Activated CD8-positive, alpha-beta memory T cell treated with anti-CD3 and anti-CD28 coated beads, Interleukin-2, amount 10 ng/mL, durations not matched to agents 7 days and 5 days (primary cell): ENCODE measurements at regions of chr1 and their contacts with region 1.

Region 1: DNA sequence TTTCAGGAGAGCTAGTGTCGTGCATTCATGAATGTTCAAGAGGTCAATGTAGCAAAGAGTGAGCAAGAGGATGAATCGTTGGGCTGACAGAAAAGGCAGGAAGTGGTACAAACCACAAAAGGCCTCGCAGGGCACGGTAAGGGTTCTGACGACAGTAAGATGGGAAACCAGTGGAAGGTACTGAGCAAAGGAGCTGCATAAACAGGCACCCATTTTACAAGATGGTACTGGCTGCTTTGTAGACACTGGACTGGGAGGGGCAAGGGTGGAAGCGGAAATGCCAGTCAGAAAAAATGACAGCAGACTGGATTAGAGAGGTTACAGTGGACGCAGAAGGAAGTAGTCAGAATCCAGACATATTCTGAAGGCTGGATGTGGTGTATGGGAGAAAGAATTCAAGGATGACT is 123.5 kb downstream of the PTPN14 start:
- DNase-seq: peak; percentile 93
- ATAC-seq: peak; percentile 100
- H3K4me3 Mint-ChIP-seq: peak overlapping the region; percentile 40
- H3K27ac Mint-ChIP-seq: peak overlapping the region; percentile 92
- H3K4me1 Mint-ChIP-seq: peaks cover 24% of the 10 kb centered on the region
- H3K27me3 Mint-ChIP-seq: no peaks in the 10 kb centered on the region

Region 2: GRCh38 chr1:214439352-214440119 is 11.7 kb after region 1 on chr1:
- CTCF ChIA-PET with region 1: interaction called, 11 read pairs
- DNase-seq: peak; percentile 60
- ATAC-seq: peak; percentile 81
- H3K4me3 Mint-ChIP-seq: peak overlapping the region; percentile 55
- H3K27ac Mint-ChIP-seq: peak overlapping the region; percentile 79
- H3K4me1 Mint-ChIP-seq: peaks cover 47% of the 10 kb centered on the region
- H3K27me3 Mint-ChIP-seq: peaks cover 15% of the 10 kb centered on the region

Region 3: DNA sequence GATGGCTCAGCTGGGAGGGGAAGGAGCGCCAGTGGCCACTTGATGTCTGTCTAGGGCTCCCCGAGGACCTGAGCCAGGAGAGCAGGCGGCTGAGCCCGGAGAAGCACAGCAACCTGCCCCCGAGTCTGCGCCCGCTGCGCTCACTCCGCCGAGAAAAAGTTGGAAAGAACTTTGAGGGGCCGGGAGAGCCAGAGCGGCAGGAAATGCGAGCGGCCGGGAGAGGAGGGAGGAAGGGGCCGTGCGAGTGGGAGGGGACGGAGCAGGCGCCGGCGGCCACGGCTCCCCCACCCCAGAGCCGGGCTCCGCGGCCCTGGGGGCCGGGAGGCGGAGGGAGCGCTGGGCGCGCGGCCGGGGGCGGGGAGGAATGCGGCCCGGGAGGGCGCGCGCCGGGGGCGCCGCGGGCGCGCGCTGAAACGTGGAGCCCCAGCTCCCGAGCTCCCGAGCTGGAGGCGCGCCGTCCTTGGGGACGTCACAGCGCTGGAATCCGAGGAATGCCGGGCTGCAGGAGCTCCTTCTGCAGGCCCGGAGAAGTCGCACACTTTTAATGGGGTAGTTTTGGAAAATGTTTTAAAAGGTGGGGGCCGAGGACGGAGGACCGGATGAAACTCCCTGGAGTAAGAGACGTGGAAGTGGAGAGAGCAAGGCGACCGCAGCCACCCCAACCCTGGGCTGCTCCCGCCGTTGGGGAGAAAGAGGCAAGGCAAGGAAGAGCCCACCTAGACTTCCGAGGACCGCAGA is 123.7 kb after region 1 on chr1 and contains the start of gene PTPN14:
- CTCF ChIA-PET with region 1: no interaction called
- DNase-seq: no peak
- ATAC-seq: no peak
- H3K4me3 Mint-ChIP-seq: peak within 1 kb of the TSS; percentile 60
- H3K27ac Mint-ChIP-seq: no peak within 1 kb of the TSS
- H3K4me1 Mint-ChIP-seq: peaks cover 5% of the 10 kb centered on the region
- H3K27me3 Mint-ChIP-seq: peaks cover 83% of the 10 kb centered on the region
- total RNA-seq, gene PTPN14: 0.32 to 1.1 TPM

Region 4: GRCh38 chr1:214707306-214708087 is 279.6 kb after region 1 on chr1:
- CTCF ChIA-PET with region 1: no interaction called
- DNase-seq: no peak
- ATAC-seq: no peak
- H3K4me3 Mint-ChIP-seq: no peak overlapping the region
- H3K27ac Mint-ChIP-seq: no peak overlapping the region
- H3K4me1 Mint-ChIP-seq: no peaks in the 10 kb centered on the region
- H3K27me3 Mint-ChIP-seq: no peaks in the 10 kb centered on the region

Region 5: DNA sequence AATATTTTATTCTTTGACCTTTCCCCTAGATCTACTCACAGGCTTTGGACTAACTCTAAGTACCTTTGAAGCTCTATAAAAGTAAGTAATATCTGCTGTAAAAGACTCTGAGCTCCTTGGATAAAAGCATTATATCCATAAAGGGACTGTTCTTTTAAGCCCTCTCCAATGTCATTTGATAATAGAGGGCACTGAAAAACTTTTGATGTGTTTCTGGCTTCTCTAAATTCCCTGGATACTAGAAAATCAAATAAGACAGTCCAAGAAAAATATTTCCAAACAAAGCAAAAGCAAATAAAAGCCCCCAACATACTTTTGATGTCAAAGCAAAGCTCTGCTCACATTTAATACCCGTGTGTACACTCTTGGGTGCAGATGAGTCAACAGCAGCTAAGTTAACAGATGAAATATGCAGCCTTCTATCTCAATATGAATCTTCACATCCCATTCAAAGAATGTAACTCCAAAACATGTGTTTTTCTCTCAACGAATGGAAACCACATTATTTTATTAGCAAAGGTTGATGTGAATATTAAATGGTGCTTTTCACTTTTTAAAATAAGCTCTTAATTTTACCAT is 405.4 kb after region 1 on chr1:
- CTCF ChIA-PET with region 1: no interaction called
- DNase-seq: no peak
- ATAC-seq: no peak
- H3K4me3 Mint-ChIP-seq: no peak overlapping the region
- H3K27ac Mint-ChIP-seq: no peak overlapping the region
- H3K4me1 Mint-ChIP-seq: no peaks in the 10 kb centered on the region
- H3K27me3 Mint-ChIP-seq: no peaks in the 10 kb centered on the region